HCT116 (cell line): ENCODE measurements at regions of chr17 and their contacts with region 1.

Region 1: GRCh38 chr17:80008383-80008840 is 27.3 kb downstream of the TBC1D16 start:
- DNase-seq: peak; percentile 61
- ATAC-seq: peak; percentile 94
- H3K4me3 ChIP-seq: no peak overlapping the region
- H3K27ac ChIP-seq: peak overlapping the region; percentile 23; the same call in 1 of the 2 replicates
- H3K4me1 ChIP-seq: peaks cover 17 to 22% of the 10 kb centered on the region in 2 experiments
- H3K27me3 ChIP-seq: no peaks in the 10 kb centered on the region
- CTCF ChIP-seq: peak; percentile 89 to 100 (median 100)
- POLR2A ChIP-seq: no peak
- RAD21 ChIP-seq: peak; percentile 81

Region 2: GRCh38 chr17:79749156-79749815 is 259.1 kb before region 1 on chr17:
- CTCF ChIA-PET with region 1: interaction called, 10 read pairs
- POLR2A ChIA-PET with region 1: no interaction called
- RAD21 ChIA-PET with region 1: no interaction called
- intact Hi-C with region 1: no loop called
- DNase-seq: no peak
- ATAC-seq: no peak
- H3K4me3 ChIP-seq: no peak overlapping the region
- H3K27ac ChIP-seq: no peak overlapping the region
- H3K4me1 ChIP-seq: peaks cover 11 to 32% of the 10 kb centered on the region in 2 experiments; a peak in 3 of 4 replicates
- H3K27me3 ChIP-seq: no peaks in the 10 kb centered on the region
- CTCF ChIP-seq: no peak
- POLR2A ChIP-seq: no peak
- RAD21 ChIP-seq: no peak

Region 3: GRCh38 chr17:79997011-79997660 is 11.3 kb before region 1 on chr17:
- CTCF ChIA-PET with region 1: interaction called, 37 read pairs
- POLR2A ChIA-PET with region 1: no interaction called
- RAD21 ChIA-PET with region 1: no interaction called
- intact Hi-C with region 1: no loop called
- DNase-seq: no peak
- ATAC-seq: peak; percentile 23; the same call in 1 of the 2 replicates
- H3K4me3 ChIP-seq: no peak overlapping the region
- H3K27ac ChIP-seq: no peak overlapping the region
- H3K4me1 ChIP-seq: peaks cover 0 to under 1% of the 10 kb centered on the region in 2 experiments; a peak in 1 of 4 replicates
- H3K27me3 ChIP-seq: no peaks in the 10 kb centered on the region
- CTCF ChIP-seq: no peak
- POLR2A ChIP-seq: no peak
- RAD21 ChIP-seq: no peak

Region 4: GRCh38 chr17:80029258-80029974 is 21.0 kb after region 1 on chr17:
- CTCF ChIA-PET with region 1: interaction called, 19 read pairs
- POLR2A ChIA-PET with region 1: no interaction called
- RAD21 ChIA-PET with region 1: interaction called in 1 of 2 experiments, 5 read pairs
- intact Hi-C with region 1: no loop called
- DNase-seq: no peak
- ATAC-seq: peak; percentile 29; the same call in 1 of the 2 replicates
- H3K4me3 ChIP-seq: no peak overlapping the region
- H3K27ac ChIP-seq: no peak overlapping the region
- H3K4me1 ChIP-seq: peaks cover 0 to 11% of the 10 kb centered on the region in 2 experiments; a peak in 2 of 4 replicates
- H3K27me3 ChIP-seq: no peaks in the 10 kb centered on the region
- CTCF ChIP-seq: no peak
- POLR2A ChIP-seq: no peak
- RAD21 ChIP-seq: no peak

Region 5: DNA sequence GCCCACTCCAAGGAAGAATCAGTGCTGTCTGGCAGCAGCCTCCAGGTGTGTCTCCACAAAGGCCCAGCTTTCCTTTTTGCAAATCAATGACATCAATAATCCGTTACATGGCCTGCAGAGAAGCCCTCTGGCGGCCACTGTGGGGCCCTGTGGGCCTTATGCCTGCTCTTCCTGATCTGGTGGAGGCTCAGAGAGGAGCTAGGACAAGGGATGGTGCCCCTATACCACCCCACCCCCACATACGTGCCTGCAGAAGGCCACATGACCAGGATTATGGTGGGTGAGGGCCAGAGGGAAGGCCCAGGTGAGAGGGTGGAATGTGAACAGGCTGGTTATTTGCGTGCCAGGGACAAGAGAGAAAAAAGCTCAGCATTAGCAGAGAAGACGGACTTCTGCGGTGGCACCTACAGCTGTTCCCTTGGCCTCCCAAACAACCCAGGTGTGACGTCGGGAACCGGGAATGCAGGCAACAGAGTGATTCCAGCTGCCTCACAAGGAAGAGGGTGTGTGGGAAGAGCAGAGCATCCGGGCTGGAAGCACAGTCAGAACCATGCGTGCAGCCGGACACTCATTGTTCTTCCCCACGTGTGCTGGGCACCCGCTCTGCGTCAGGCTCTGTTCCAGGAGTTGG is 116.1 kb after region 1 on chr17:
- CTCF ChIA-PET with region 1: interaction called, 14 read pairs
- POLR2A ChIA-PET with region 1: no interaction called
- RAD21 ChIA-PET with region 1: no interaction called
- intact Hi-C with region 1: no loop called
- DNase-seq: peak; percentile 29
- ATAC-seq: peak; percentile 92
- H3K4me3 ChIP-seq: no peak overlapping the region
- H3K27ac ChIP-seq: no peak overlapping the region
- H3K4me1 ChIP-seq: peaks cover 0 to 13% of the 10 kb centered on the region in 2 experiments; a peak in 1 of 4 replicates
- H3K27me3 ChIP-seq: 0 out of 2 replicates have a peak, but pooled peaks cover 6% of the 10 kb centered on the region
- CTCF ChIP-seq: peak; percentile 57 to 75 (median 69); a peak in 5 of 6 replicates
- POLR2A ChIP-seq: no peak
- RAD21 ChIP-seq: peak; percentile 50

Region 6: DNA sequence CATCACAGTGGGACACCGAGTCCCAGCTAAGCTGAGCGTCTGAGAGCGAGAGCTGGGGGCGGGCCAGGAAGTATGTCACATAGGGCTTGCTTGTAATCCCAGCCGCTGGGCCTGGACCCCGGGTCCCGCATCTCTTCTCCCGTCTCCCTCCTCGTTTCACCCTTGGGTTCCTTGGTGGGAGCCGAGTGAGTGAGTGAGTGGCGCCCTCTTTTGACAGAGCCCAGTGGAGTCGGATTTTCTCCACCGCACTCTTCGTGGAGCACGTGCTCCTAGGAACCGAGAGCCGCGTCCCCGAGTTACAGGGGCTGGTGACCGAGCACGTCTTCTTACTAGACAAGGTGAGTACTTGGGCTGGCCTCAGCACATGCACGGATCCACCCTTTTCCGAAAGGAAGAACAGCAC is 355.8 kb after region 1 on chr17:
- CTCF ChIA-PET with region 1: interaction called, 4 read pairs
- POLR2A ChIA-PET with region 1: no interaction called
- RAD21 ChIA-PET with region 1: no interaction called
- intact Hi-C with region 1: loop called (anchors 2 kb)
- DNase-seq: peak; percentile 8
- ATAC-seq: peak; percentile 86
- H3K4me3 ChIP-seq: no peak overlapping the region
- H3K27ac ChIP-seq: no peak overlapping the region
- H3K4me1 ChIP-seq: no peaks in the 10 kb centered on the region
- H3K27me3 ChIP-seq: no peaks in the 10 kb centered on the region
- CTCF ChIP-seq: peak; percentile 59 to 77 (median 74); a peak in 5 of 6 replicates
- POLR2A ChIP-seq: no peak
- RAD21 ChIP-seq: peak; percentile 81